Thyroid gland (tissue), 4 donors: ENCODE measurements at regions of chr1 and their contacts with region 1.

Region 1: GRCh38 chr1:13960375-13960987 is 260.5 kb downstream of the PRDM2 start:
- DNase-seq: peak; percentile 72 to 79
- H3K4me3 ChIP-seq: no peak overlapping the region
- H3K27ac ChIP-seq: no peak overlapping the region
- H3K4me1 ChIP-seq: no peaks in the 10 kb centered on the region
- H3K27me3 ChIP-seq: no peaks in the 10 kb centered on the region
- CTCF ChIP-seq: peak; percentile 81 to 97 (median 96)
- POLR2A ChIP-seq: no peak

Region 2: DNA sequence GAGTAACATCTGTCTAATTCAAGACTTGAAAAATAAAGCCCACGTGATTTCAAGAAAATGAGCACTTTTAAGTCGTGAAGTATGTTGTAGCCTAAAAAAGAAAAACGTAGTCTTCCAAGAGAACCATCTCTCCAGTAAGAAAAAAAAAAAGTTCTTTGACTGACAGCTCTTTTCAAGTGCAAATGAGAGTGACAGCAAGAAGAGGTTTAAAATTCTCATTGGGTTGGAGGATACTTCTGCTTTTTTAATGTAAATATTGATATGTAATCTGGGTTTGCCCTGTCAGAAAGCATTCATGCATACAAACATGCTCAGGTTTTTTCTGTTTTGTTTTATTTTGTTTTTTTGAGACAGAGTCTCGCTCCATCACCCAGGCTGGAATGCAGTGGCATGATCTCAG is 292.8 kb before region 1 on chr1:
- intact Hi-C with region 1: loop called (anchors 2 kb)
- DNase-seq: no peak
- H3K4me3 ChIP-seq: no peak overlapping the region
- H3K27ac ChIP-seq: no peak overlapping the region
- H3K4me1 ChIP-seq: no peaks in the 10 kb centered on the region
- H3K27me3 ChIP-seq: no peaks in the 10 kb centered on the region
- CTCF ChIP-seq: no peak
- POLR2A ChIP-seq: no peak

Region 3: GRCh38 chr1:13828454-13829151 is 131.9 kb before region 1 on chr1:
- intact Hi-C with region 1: loop called (anchors 5 kb)
- DNase-seq: peak; percentile 66 to 78
- H3K4me3 ChIP-seq: no peak overlapping the region
- H3K27ac ChIP-seq: no peak overlapping the region
- H3K4me1 ChIP-seq: peaks cover 14 to 21% of the 10 kb centered on the region in 2 donors
- H3K27me3 ChIP-seq: no peaks in the 10 kb centered on the region
- CTCF ChIP-seq: peak; percentile 41 to 71 (median 58)
- POLR2A ChIP-seq: no peak

Region 4: DNA sequence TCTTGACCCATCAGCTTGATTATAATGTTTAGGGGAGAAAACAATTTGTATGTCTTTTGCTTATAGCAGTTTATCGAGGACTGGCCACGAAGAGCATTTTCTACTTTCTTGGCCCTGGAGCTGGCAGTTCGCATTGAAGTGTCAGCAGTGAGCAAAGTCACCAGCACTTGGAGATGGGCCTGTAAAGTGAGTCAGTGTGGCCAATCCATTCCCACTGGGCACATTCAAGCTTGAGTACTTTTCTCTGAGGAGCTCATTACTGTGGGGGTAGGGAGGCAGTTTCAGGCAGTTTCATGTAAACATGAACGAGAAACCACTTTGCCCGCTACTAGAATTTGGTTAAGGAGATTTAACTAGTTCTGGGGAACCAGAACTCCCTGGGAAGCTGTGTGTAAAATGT is 95.7 kb before region 1 on chr1:
- intact Hi-C with region 1: no loop called
- DNase-seq: peak; percentile 35 to 44
- H3K4me3 ChIP-seq: no peak overlapping the region
- H3K27ac ChIP-seq: no peak overlapping the region
- H3K4me1 ChIP-seq: no peaks in the 10 kb centered on the region
- H3K27me3 ChIP-seq: no peaks in the 10 kb centered on the region
- CTCF ChIP-seq: no peak
- POLR2A ChIP-seq: no peak

Region 5: DNA sequence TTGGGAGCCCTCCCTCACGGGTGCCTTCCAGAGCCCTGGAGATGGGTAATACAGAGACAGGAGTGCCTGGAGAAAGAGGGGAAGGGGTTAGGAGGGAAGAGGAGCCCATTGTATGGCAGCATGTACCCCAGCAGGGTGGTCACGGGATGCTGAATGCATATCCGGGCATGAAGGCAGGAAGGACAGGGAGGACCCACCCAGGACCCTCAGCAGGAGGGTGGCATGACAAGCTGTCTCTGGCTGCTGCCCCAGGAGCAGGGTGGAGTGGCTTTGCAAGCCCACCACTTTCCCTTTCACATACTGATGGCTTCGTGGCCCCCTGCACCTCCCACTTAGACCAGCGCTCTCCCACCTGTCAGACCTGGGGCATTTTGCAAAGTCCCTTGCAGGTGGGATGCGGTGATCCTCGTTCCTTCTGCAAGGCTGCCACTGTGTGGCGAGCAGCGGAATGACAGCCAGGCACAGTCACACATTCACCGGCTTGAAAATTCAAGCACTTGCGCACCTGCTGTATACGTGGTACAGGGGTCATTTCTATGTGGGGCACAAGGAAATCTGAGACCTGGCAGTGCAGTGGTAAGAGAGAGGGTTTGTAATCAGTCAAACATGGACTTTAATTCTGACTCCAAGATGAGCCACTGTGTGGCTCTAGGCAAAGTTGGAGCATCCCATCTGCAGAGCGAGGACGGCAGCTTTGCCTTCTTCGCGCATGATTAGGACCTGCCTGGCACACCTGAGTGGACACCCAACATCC is 1139.8 kb after region 1 on chr1:
- intact Hi-C with region 1: loop called (anchors 10 kb)
- DNase-seq: peak; percentile 54 to 58
- H3K4me3 ChIP-seq: no peak overlapping the region
- H3K27ac ChIP-seq: no peak overlapping the region
- H3K4me1 ChIP-seq: no peaks in the 10 kb centered on the region
- H3K27me3 ChIP-seq: no peaks in the 10 kb centered on the region
- CTCF ChIP-seq: peak; percentile 79 to 95 (median 88)
- POLR2A ChIP-seq: no peak